CD4-positive, alpha-beta memory T cell (primary cell): ENCODE measurements at regions of chr17 and their contacts with region 1.

Region 1: DNA sequence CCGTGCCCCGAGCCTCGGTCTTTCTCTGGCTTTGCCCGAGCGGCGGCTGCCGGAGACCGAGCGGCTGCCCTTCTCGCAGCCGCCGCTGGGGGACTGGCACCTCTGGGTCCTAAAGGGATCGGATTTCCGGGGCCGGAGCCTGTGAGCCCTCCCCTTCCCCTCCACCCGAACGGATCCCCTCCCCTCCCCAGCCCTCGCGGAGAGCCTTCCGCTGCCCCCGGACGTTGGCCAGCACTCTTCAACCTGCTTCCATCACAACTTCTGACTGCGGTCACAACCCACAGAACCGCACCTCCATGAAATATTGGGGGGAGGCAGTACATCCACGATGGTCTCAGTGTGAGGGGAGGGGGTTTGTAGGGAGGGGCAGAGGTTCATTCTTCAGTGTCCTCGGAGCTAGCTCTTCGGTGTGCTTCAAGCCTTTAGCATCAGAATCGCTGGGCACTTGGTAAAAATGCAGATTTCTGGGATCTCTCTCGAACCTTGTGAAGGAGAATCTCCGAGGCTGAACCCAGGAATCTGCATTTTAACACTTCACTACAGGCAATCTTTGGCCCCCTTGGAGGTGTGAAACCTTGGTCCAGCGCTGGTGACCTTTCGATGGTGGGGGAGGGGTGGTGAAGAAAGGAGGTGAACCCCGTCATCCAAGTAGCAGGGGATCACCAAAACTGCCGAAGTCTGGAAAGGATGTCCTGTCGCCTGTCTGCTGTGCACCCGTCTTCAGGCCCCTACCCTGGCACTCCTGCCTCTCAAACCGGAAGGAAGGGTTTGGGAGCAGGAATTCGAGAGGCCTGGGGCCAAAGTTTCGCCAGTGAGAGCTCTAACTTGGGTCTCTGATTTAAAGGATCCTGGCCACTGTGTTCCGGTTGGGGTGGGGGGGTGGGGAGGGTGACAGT is 812 bp upstream of the PPP1R9B start:
- DNase-seq: peak; percentile 82 to 91 (median 84)
- H3K4me3 ChIP-seq: peak overlapping the region; percentile 76 to 93
- H3K4me3 Mint-ChIP-seq: peak overlapping the region; percentile 85 to 94 (median 89)
- H3K27ac ChIP-seq: peak overlapping the region; percentile 79
- H3K27ac Mint-ChIP-seq: peak overlapping the region; percentile 86 to 98 (median 91)
- H3K4me1 ChIP-seq: peaks cover 50% of the 10 kb centered on the region
- H3K4me1 Mint-ChIP-seq: peaks cover 20 to 54% (median 37%) of the 10 kb centered on the region in 4 donors
- H3K27me3 ChIP-seq: no peaks in the 10 kb centered on the region
- H3K27me3 Mint-ChIP-seq: no peaks in the 10 kb centered on the region

Region 2: GRCh38 chr17:50106393-50107131 is 44.7 kb before region 1 on chr17:
- CTCF ChIA-PET with region 1: no interaction called
- POLR2A ChIA-PET with region 1: no interaction called
- intact Hi-C with region 1: no loop called
- DNase-seq: no peak
- H3K4me3 ChIP-seq: no peak overlapping the region
- H3K4me3 Mint-ChIP-seq: no peak overlapping the region
- H3K27ac ChIP-seq: no peak overlapping the region
- H3K27ac Mint-ChIP-seq: no peak overlapping the region
- H3K4me1 ChIP-seq: no peaks in the 10 kb centered on the region
- H3K4me1 Mint-ChIP-seq: no peaks in the 10 kb centered on the region
- H3K27me3 ChIP-seq: no peaks in the 10 kb centered on the region
- H3K27me3 Mint-ChIP-seq: no peaks in the 10 kb centered on the region

Region 3: DNA sequence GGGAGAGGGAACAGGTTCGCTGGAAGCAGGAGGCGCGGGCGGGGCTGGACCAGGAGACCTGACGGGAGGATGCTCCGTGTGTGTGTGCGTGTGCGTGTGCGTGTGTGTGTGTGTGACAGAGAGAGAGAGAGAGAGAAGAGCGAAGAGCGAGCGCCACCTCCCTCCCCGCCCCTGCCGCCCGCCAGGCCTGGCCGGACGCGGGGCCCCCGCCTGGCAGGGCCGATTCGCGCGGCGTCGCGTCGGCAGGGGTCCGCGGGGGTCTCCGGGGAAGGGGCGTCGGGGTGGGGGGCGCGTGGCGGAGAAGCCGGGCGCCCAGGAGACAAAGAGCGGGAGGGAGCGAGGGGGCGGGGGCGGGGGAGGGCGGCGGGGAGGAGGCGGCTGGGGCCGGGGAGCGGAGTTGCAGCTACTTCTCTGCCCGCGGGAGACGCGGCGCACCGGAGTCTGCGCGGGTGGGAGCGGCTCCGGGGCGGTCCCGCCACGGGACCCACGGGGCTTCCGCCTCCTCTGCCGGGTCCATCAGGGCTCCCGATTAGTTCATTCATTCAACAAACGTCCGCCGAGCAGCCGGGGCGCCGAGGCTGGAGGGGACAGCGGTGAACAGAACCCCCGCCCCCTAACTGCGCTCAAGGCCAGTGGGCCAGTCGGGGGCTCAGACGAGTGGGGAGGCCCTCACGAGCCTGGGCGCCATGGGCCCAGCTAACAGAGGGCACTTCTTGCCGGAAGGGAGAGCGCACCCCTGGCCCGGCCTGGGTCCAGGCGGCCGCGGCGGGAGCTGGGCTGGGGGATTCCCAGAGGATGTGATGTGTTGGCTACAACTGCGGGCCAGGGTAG is 21.3 kb before region 1 on chr17 and contains the start of gene SAMD14:
- CTCF ChIA-PET with region 1: interaction called, 6 read pairs
- POLR2A ChIA-PET with region 1: interaction called, 27 read pairs
- intact Hi-C with region 1: no loop called
- DNase-seq: peak; percentile 63 to 80 (median 68)
- H3K4me3 ChIP-seq: peak within 1 kb of the TSS in 1 of 2 donors; percentile 49
- H3K4me3 Mint-ChIP-seq: peak within 1 kb of the TSS; percentile 76 to 95 (median 84)
- H3K27ac ChIP-seq: no peak within 1 kb of the TSS
- H3K27ac Mint-ChIP-seq: peak within 1 kb of the TSS; percentile 72 to 99 (median 92)
- H3K4me1 ChIP-seq: peaks cover 26% of the 10 kb centered on the region
- H3K4me1 Mint-ChIP-seq: peaks cover 11 to 42% (median 26%) of the 10 kb centered on the region in 4 donors
- H3K27me3 ChIP-seq: peaks cover 6% of the 10 kb centered on the region
- H3K27me3 Mint-ChIP-seq: peaks cover 3 to 7% of the 10 kb centered on the region in 2 donors
- total RNA-seq, gene SAMD14: 1.2 to 1.3 TPM